ENCODE measurements at regions of chr7 and their contacts with region 1.

Region 1: DNA sequence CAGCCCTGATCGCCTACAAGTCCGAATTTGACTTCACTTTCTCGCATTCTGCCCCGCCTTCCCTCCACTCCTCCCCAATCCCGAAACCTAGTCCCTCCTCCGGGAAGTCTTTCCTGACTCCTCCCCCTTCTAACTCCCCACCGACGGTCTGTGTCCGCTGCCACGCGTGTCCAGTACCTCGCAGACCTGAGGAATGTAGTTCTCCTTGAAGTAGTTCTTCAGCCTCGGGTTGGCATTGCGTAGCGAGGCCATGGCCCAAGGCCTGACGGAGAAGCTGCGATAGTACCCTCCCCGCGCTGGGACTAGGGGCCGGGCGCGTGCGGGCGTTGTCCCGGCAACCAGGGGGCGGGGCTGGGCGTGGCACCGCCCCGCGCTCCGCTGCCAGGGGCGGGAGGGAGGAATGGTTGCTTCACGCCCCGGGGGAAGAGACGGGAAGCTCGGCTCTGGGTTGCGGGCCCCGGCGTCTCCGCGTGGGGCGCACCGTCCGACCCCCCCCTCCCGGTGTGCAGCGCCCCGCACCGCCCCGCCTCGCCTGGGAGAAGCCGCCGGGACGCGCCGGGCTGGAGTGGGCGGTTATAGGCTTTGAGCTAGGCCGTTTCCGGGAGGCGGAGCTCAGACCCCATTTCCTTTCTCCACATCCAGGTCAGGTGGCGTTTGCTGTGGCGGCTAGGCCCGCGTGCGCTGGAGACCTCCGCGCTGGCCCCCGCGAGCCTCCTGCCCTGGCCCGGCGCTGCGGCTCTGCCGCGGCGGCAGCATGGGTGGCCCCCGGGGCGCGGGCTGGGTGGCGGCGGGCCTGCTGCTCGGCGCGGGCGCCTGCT is at the starts of genes ARMC10 and FBXL13:
- DNase-seq: peak; percentile 88
- ATAC-seq: peak; percentile 95
- H3K4me3 ChIP-seq: peak within 1 kb of the TSS; percentile 80 to 93 (median 91)
- H3K27ac ChIP-seq: peak within 1 kb of the TSS; percentile 76
- H3K4me1 ChIP-seq: peaks cover 22% of the 10 kb centered on the region
- H3K27me3 ChIP-seq: no peaks in the 10 kb centered on the region; a peak in 1 of 5 replicates
- CTCF ChIP-seq: peak; percentile 35; the same call in 1 of the 2 replicates
- EP300 ChIP-seq: no peak
- POLR2A ChIP-seq: peak; percentile 86
- RAD21 ChIP-seq: 0 out of 2 replicates have a peak, but pooled peaks have one; percentile 22
- total RNA-seq, gene ARMC10: 23.5 and 23.7 TPM in 2 replicates
- total RNA-seq, gene FBXL13: 0.22 and 0.77 TPM in 2 replicates

Region 2: DNA sequence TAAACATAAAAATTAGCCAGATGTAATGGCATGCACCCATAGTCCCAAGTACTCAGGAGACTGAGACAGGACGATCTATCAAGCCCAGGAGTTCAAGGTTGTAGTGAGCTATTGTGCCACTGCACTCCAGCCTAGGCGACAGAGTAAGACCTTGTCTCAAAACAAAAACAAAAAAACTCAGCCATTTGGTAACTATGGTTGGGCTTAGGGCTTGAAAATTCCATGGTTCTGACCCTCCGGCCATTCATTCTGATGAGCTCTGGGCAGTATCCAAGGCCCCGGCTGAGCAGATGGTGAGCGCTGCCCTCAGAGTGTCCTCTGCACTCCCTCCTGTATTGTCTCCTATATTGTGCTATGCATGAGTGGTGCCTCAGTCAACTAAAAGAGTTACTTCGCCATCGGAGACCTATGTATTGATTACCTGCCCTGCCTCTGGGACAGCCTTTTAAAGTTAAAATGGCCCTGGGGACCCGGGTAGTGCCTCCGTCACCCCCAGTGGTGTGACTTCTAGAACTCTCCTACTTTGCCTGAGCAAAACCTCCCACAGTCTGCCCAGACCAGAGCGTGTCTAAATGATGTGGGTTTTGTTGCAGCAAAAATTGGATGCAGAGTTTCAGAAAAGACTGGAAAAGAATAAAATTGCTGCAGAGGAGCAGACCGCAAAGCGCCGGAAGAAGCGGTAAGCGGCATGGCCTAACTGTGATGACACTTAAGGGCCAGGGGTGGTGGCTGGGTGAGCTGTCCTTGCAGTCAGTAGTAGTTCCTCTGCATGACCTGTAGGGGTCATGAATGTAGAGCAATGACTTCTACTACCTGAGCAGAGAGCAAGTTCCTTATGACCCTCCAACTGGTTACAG is 670.5 kb before region 1 on chr7:
- CTCF ChIA-PET with region 1: no interaction called
- POLR2A ChIA-PET with region 1: no interaction called
- in situ Hi-C with region 1: no loop called
- intact Hi-C with region 1: no loop called
- DNase-seq: peak; percentile 64
- ATAC-seq: peak; percentile 95
- H3K4me3 ChIP-seq: no peak overlapping the region
- H3K27ac ChIP-seq: peak overlapping the region; percentile 60
- H3K4me1 ChIP-seq: peaks cover 14% of the 10 kb centered on the region; the same call in 1 of the 2 replicates
- H3K27me3 ChIP-seq: no peaks in the 10 kb centered on the region
- CTCF ChIP-seq: peak; percentile 80
- EP300 ChIP-seq: no peak
- POLR2A ChIP-seq: no peak
- RAD21 ChIP-seq: peak; percentile 48

Region 3: GRCh38 chr7:103037476-103037822 is 37.3 kb before region 1 on chr7:
- CTCF ChIA-PET with region 1: no interaction called
- POLR2A ChIA-PET with region 1: interaction called, 16 read pairs
- in situ Hi-C with region 1: no loop called
- intact Hi-C with region 1: no loop called
- DNase-seq: peak; percentile 4
- ATAC-seq: peak; percentile 66
- H3K4me3 ChIP-seq: no peak overlapping the region
- H3K27ac ChIP-seq: peak overlapping the region; percentile 47
- H3K4me1 ChIP-seq: peaks cover 17% of the 10 kb centered on the region
- H3K27me3 ChIP-seq: no peaks in the 10 kb centered on the region
- CTCF ChIP-seq: no peak
- EP300 ChIP-seq: no peak
- POLR2A ChIP-seq: no peak
- RAD21 ChIP-seq: no peak

Region 4: DNA sequence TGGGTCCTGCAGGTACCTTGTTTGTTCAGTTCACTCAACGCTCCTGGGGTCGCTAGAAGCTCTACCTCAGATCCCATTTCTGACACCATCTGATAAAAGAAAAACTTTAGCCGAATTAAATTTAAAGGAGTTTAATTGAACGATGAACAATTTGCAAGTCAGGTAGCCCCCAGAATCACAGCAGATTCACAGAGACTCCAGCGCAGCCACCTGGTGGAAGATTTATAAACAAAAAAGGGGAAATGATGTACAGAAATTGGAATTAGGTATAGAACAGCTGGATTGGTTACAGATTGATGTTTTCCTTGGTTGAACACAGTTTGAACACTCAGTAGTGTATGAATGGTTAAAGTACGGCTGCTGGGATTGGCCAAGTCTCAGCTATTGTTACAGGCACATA is 23.2 kb before region 1 on chr7:
- CTCF ChIA-PET with region 1: no interaction called
- POLR2A ChIA-PET with region 1: no interaction called
- in situ Hi-C with region 1: no loop called
- intact Hi-C with region 1: no loop called
- DNase-seq: no peak
- ATAC-seq: no peak
- H3K4me3 ChIP-seq: no peak overlapping the region
- H3K27ac ChIP-seq: no peak overlapping the region
- H3K4me1 ChIP-seq: no peaks in the 10 kb centered on the region
- H3K27me3 ChIP-seq: no peaks in the 10 kb centered on the region
- CTCF ChIP-seq: no peak
- EP300 ChIP-seq: no peak
- POLR2A ChIP-seq: no peak
- RAD21 ChIP-seq: no peak

Region 5: DNA sequence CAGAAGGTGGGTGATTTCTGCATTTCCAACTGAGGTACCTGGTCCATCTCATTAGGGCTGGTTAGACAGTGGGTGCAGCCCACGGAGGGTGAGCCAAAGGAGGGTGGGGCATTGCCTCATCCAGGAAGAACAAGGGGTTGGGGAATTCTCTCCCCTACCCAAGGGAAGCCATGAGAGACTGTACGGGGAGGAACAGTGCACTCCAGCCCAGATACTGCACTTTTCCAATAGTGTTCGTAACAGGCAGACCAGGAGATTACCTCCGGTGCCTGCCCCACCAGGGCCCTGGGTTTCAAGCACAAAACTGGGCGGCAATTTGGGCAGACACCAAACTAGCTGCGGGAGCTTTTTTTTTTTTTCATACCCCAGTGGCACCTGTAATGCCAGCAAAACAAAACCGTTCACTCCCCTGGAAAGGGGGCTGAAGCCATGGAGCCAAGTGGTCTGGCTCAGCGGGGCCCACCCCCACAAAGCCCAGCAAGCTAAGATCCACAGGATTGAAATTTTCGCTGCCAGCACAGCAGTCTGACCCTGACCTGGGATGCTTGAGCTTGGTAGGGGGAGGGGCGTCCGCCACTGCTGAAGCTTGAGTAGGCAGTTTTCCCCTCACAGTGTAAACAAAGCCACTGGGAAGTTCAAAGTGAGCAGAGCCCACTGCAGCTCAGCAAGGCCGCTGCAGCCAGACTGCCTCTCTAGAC is 31.4 kb after region 1 on chr7:
- CTCF ChIA-PET with region 1: no interaction called
- POLR2A ChIA-PET with region 1: interaction called, 13 read pairs
- in situ Hi-C with region 1: no loop called
- intact Hi-C with region 1: no loop called
- DNase-seq: peak; percentile 88
- ATAC-seq: peak; percentile 98
- H3K4me3 ChIP-seq: peak overlapping the region; percentile 10 to 58 (median 16); a peak in 5 of 6 replicates
- H3K27ac ChIP-seq: peak overlapping the region; percentile 76
- H3K4me1 ChIP-seq: peaks cover 26% of the 10 kb centered on the region
- H3K27me3 ChIP-seq: no peaks in the 10 kb centered on the region
- CTCF ChIP-seq: no peak
- EP300 ChIP-seq: peak in 1 of 2 experiments; percentile 48; a peak in 1 of 4 replicates
- POLR2A ChIP-seq: no peak
- RAD21 ChIP-seq: no peak; the same call in 1 of the 2 replicates

Region 6: GRCh38 chr7:103148994-103149807 is 74.5 kb after region 1 on chr7 and contains the start of gene NAPEPLD:
- CTCF ChIA-PET with region 1: no interaction called
- POLR2A ChIA-PET with region 1: interaction called, 12 read pairs
- in situ Hi-C with region 1: no loop called
- intact Hi-C with region 1: loop called (anchors 1 kb)
- DNase-seq: peak; percentile 72
- ATAC-seq: peak; percentile 91
- H3K4me3 ChIP-seq: peak within 1 kb of the TSS; percentile 64 to 81 (median 78)
- H3K27ac ChIP-seq: peak within 1 kb of the TSS; percentile 90
- H3K4me1 ChIP-seq: peaks cover 77% of the 10 kb centered on the region
- H3K27me3 ChIP-seq: no peaks in the 10 kb centered on the region
- CTCF ChIP-seq: no peak
- EP300 ChIP-seq: no peak
- POLR2A ChIP-seq: peak; percentile 52 to 78; a peak in 3 of 4 replicates
- RAD21 ChIP-seq: no peak
- total RNA-seq, gene NAPEPLD: 5.6 and 6.8 TPM in 2 replicates

Region 7: DNA sequence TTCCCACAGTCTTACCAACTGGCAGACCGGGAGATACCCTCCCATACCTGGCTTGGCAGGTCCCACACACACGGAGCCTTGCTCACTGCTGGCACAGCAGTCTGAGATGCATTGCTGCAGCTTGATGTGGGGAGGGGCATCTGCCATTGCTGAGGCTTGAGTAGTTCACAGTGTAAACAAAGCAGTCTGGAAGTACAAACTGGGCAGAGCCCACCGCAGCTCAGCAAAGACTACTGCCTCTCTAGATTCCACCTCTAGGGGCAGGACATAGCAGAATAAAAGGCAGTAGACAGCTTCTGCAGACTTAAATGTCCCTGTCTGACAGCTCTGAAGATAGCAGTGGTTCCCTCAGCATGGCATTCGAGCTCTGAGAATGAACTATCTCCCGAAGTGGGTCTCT is 984.4 kb after region 1 on chr7:
- CTCF ChIA-PET with region 1: no interaction called
- POLR2A ChIA-PET with region 1: no interaction called
- in situ Hi-C with region 1: no loop called
- intact Hi-C with region 1: no loop called
- DNase-seq: peak; percentile 67
- ATAC-seq: peak; percentile 96
- H3K4me3 ChIP-seq: no peak overlapping the region
- H3K27ac ChIP-seq: peak overlapping the region; percentile 6
- H3K4me1 ChIP-seq: peaks cover 65% of the 10 kb centered on the region
- H3K27me3 ChIP-seq: no peaks in the 10 kb centered on the region
- CTCF ChIP-seq: peak; percentile 33
- EP300 ChIP-seq: peak in 1 of 2 experiments; percentile 19; a peak in 1 of 4 replicates
- POLR2A ChIP-seq: no peak
- RAD21 ChIP-seq: no peak